Colonic mucosa (tissue), 4 donors: ENCODE measurements at regions of chr4 and their contacts with region 1.

Region 1: DNA sequence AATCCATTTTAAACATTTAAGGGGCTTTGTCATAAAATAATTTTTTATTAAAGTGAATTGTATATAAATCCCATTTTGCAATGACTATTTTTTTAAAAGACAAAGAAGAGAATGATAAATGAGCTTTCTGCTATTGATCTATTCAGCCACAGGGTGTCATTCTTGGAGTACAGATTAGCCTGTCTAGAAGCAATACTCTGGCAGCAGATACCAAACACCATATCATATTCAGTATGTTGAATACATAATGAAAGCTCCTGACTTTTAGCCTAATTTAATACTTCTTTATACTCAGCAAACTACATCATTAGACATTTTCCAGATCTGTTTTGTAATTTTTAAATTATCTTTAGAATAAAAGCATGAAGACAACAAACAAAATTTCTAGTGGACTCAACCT is 496.3 kb downstream of the PDGFC start:
- DNase-seq: no peak
- H3K4me3 ChIP-seq: no peak overlapping the region
- H3K27ac ChIP-seq: no peak overlapping the region
- H3K4me1 ChIP-seq: no peaks in the 10 kb centered on the region
- H3K27me3 ChIP-seq: no peaks in the 10 kb centered on the region
- CTCF ChIP-seq: no peak

Region 2: GRCh38 chr4:156420623-156421022 is 54.7 kb before region 1 on chr4:
- intact Hi-C with region 1: no loop called
- DNase-seq: no peak
- H3K4me3 ChIP-seq: no peak overlapping the region
- H3K27ac ChIP-seq: no peak overlapping the region
- H3K4me1 ChIP-seq: no peaks in the 10 kb centered on the region
- H3K27me3 ChIP-seq: no peaks in the 10 kb centered on the region
- CTCF ChIP-seq: no peak

Region 3: DNA sequence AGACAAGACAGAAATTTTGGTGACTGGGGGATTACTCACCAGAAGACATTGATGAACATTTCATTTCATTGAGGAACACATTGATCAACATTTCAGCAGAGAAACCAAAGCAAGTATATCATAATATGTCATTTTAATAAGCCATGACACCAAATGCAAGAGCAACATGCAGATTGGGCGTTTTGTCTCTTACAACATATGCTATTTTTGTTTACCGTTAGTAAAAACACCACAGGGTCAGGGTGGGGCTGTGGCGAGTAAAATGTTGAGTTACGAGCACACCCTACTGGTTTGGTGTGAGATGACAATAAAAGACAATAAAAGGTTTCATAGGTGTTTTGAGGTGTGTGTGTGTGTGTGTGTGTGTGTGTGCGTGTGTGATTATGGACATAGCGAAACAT is 201.8 kb after region 1 on chr4:
- intact Hi-C with region 1: loop called (anchors 10 kb)
- DNase-seq: peak; percentile 28
- H3K4me3 ChIP-seq: no peak overlapping the region
- H3K27ac ChIP-seq: no peak overlapping the region
- H3K4me1 ChIP-seq: no peaks in the 10 kb centered on the region
- H3K27me3 ChIP-seq: no peaks in the 10 kb centered on the region
- CTCF ChIP-seq: no peak

Region 4: GRCh38 chr4:156968479-156968984 is 493.2 kb after region 1 on chr4:
- intact Hi-C with region 1: loop called (anchors 10 kb)
- DNase-seq: peak; percentile 82
- H3K4me3 ChIP-seq: no peak overlapping the region
- H3K27ac ChIP-seq: no peak overlapping the region
- H3K4me1 ChIP-seq: no peaks in the 10 kb centered on the region
- H3K27me3 ChIP-seq: no peaks in the 10 kb centered on the region
- CTCF ChIP-seq: peak; percentile 84

Region 5: DNA sequence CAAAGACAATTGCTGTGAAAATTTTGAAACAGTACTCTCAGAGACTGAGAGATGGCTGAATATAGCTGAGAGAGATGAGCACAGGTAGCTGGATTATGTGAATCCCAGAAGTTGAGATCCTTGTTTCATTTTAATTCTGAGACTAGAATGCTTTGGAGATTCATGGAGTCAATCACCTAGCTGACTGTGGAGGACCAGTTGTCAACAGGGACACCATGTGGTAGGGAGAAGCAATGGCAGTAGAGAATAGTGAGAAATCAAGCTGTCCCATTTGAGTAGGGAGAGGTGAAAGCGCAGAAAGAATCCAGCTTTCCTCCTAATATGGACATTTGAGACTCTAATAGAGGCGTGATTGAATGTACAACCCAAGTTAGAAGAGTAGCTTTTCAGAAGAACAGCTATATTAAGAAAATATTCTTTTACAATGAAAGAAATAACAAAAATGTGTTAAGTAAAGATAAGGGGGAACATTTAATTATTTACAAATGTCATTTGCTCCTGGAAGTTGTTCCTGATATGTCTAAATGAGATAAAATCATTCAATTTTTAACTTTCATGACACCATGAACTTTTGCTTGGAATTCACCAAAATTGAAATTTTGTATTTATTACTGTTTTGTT is 570.3 kb after region 1 on chr4:
- intact Hi-C with region 1: loop called (anchors 10 kb)
- DNase-seq: no peak
- H3K4me3 ChIP-seq: no peak overlapping the region
- H3K27ac ChIP-seq: no peak overlapping the region
- H3K4me1 ChIP-seq: no peaks in the 10 kb centered on the region
- H3K27me3 ChIP-seq: no peaks in the 10 kb centered on the region
- CTCF ChIP-seq: peak; percentile 46

Region 6: GRCh38 chr4:157204634-157205244 is 729.4 kb after region 1 on chr4:
- intact Hi-C with region 1: loop called (anchors 10 kb)
- DNase-seq: no peak
- H3K4me3 ChIP-seq: no peak overlapping the region
- H3K27ac ChIP-seq: no peak overlapping the region
- H3K4me1 ChIP-seq: no peaks in the 10 kb centered on the region
- H3K27me3 ChIP-seq: no peaks in the 10 kb centered on the region
- CTCF ChIP-seq: peak; percentile 28